ENCODE measurements at regions of chr20 and their contacts with region 1.

Region 1: DNA sequence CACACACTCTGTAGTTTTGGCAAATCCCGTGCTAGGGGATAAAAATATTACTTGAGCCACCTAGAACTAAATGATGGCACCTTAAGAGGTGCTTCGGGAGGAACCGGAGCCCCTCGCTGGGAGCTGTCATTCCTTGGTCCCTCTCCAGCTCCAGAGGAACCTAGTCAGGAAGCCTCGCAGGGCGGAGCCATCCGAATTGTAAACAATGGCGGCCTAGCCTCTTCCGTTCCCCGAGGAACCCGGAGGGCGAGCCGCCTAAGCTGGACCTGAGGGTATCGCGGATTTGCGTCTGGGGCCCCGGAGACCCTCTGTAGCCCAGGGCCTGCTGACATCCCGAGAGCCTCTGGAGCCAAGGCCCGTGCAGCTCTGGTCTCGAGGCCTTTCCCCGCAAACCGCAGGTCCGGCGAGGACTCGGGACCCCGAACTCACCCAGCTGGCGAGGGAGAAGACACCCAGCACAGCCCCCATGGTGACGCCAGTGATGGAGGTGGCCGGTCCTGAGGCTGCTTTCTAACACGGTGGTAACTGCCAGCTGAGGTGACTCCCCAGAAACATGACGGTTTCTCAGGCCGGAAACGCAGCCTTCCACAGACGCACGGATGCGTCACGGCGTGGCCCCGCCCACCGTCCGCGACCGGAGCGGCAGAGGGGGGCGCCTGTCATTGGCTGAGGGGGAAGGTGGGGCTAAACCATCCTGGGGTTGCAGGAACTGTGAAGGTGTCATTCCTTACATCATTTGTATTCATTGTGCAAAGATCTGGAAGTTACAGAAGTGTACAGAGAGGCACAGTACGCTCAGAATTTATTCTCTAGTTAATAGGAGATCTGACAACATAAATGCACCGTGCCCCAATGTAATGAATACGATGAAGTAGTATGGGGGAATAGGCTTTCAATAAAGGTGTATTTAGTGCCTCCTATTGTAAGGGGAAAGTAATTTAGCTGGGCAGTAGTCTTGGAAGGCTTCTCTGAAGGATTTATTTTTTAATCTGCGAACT is at the start of gene SERINC3:
- DNase-seq: peak; percentile 97
- H3K4me3 Mint-ChIP-seq: peak within 1 kb of the TSS; percentile 73
- H3K27ac Mint-ChIP-seq: peak within 1 kb of the TSS; percentile 85
- H3K4me1 Mint-ChIP-seq: peaks cover 49% of the 10 kb centered on the region
- H3K27me3 Mint-ChIP-seq: no peaks in the 10 kb centered on the region
- total RNA-seq, gene SERINC3: 90.8 to 93.3 TPM

Region 2: DNA sequence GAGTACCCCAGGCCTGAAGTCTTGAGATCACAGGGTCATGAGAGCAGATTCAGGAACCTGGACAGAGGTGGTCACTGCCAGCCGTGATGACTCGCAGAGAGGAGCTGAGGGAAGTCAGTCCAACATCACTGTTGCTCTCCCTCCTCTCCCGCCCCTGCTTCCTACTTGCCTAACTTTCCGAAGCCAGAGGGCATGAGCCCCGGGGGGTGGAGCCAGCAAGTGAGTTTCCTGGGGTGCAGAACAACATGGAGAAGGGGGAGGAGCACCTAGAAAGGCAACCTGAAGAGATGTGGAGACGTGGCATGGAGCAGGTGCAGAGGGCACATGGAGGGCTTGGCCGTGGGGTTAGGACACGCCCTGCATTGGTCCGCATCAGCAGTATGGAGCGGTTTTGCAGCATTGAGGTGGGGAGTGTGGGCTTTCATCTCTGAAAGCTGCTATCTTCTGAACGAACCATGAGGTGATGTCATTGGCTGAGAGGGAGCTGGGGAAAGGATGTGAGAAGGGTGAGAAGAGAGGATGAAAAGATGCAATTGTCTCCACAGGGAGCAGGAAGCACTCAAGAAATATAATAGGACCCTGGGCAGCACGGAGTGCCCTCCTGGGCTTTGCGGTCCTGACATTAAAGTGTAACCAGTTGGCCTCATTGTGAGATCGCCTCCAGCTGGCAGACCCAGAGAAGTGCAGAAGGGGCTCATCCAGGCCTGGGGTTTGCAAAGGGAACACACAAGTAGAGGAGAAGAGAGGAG is 249.7 kb before region 1 on chr20:
- CTCF ChIA-PET with region 1: no interaction called
- POLR2A ChIA-PET with region 1: no interaction called
- DNase-seq: no peak
- H3K4me3 Mint-ChIP-seq: no peak overlapping the region
- H3K27ac Mint-ChIP-seq: no peak overlapping the region
- H3K4me1 Mint-ChIP-seq: no peaks in the 10 kb centered on the region
- H3K27me3 Mint-ChIP-seq: no peaks in the 10 kb centered on the region

Region 3: GRCh38 chr20:44475694-44476560 is 45.9 kb before region 1 on chr20 and contains the start of gene TTPAL:
- CTCF ChIA-PET with region 1: interaction called, 7 read pairs
- POLR2A ChIA-PET with region 1: interaction called, 29 read pairs
- DNase-seq: peak; percentile 91
- H3K4me3 Mint-ChIP-seq: peak within 1 kb of the TSS; percentile 93
- H3K27ac Mint-ChIP-seq: peak within 1 kb of the TSS; percentile 91
- H3K4me1 Mint-ChIP-seq: peaks cover 25% of the 10 kb centered on the region
- H3K27me3 Mint-ChIP-seq: no peaks in the 10 kb centered on the region
- total RNA-seq, gene TTPAL: 15.5 to 16.6 TPM

Region 4: DNA sequence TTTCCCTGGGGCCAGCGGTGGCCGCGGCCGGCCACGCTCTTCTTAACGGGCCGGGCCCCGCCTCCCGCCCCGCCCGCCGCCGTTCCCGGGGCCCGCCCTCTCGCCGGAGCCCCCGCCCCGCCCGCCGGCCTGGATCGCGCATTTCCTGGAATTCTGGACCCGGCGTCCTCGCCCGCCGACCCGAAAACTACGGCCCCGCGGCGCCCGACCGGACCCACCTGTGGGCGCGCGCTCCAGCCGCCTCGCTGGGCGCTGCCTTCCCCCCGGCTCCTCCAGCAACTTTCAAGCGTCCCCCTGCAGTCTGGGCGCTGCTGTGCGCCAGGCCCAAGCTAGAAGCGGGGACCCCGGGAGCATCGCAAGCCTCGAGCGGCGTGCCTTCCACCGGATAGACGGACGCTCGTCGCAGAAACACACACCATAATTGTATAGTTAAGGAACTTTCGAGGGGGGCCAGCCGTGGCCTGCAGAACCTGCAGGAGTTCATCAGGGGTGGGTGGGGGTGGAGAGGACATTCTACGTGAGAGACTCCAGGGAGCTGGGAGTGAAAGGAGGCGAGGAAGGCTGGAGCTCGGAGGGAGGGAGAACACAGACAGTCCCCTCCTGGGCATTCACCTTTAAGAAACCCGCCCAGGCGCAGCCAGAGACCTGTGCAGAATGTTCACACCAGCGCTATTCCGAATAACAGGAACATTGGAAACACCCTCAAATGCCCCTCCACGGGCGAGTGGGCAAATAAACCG is 130.1 kb after region 1 on chr20 and contains the start of gene ADA:
- CTCF ChIA-PET with region 1: no interaction called
- POLR2A ChIA-PET with region 1: interaction called, 14 read pairs
- DNase-seq: peak; percentile 61
- H3K4me3 Mint-ChIP-seq: peak within 1 kb of the TSS; percentile 96
- H3K27ac Mint-ChIP-seq: peak within 1 kb of the TSS; percentile 81
- H3K4me1 Mint-ChIP-seq: peaks cover 52% of the 10 kb centered on the region
- H3K27me3 Mint-ChIP-seq: no peaks in the 10 kb centered on the region
- total RNA-seq, gene ADA: 79.0 to 79.7 TPM